ENCODE measurements at regions of chr12 and their contacts with region 1.

Region 1: DNA sequence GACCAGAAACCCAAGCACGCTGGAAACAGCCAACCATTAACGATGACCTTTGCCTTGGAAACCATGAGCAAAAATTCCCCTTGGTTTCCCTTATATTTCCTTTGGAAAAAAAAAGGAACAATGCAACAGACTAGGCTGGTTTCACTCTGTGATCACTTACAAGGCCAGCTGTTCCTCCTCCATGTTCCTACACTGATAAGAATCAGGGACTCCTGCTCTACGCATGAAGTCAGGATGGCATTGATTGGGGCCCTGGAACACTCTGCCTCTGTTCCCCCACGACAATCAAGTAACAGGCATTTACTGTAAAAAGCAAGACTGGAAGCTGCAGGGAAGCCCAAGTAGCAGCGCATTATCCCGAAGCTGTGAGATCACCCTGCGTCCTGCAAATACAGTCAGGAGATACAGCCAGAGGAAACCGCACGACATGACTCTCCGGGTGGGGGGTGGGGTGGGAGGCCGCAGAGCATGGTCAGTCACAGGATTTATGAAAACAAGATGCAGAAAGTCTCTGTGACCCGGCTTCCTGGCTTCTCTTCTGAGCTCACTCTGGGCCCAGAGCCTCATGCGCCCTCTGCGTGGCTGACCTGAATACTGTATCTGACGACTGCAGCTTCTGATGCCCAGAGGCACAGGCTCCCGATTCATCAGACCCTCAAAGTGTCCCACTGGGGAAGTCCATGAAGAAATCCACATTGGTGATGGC is 31.1 kb downstream of the SSH1 start:
- DNase-seq: peak; percentile 21 to 35
- ATAC-seq: peak; percentile 62 to 74 (median 72)
- H3K4me3 ChIP-seq: peak overlapping the region; percentile 6
- H3K4me3 Mint-ChIP-seq: peak overlapping the region; percentile 72
- H3K27ac ChIP-seq: peak overlapping the region; percentile 68
- H3K27ac Mint-ChIP-seq: peak overlapping the region; percentile 91 to 95
- H3K4me1 ChIP-seq: peaks cover 64% of the 10 kb centered on the region
- H3K4me1 Mint-ChIP-seq: peaks cover 68 to 73% of the 10 kb centered on the region in 2 donors
- H3K27me3 ChIP-seq: no peaks in the 10 kb centered on the region
- H3K27me3 Mint-ChIP-seq: no peaks in the 10 kb centered on the region
- CTCF ChIP-seq: no peak

Region 2: DNA sequence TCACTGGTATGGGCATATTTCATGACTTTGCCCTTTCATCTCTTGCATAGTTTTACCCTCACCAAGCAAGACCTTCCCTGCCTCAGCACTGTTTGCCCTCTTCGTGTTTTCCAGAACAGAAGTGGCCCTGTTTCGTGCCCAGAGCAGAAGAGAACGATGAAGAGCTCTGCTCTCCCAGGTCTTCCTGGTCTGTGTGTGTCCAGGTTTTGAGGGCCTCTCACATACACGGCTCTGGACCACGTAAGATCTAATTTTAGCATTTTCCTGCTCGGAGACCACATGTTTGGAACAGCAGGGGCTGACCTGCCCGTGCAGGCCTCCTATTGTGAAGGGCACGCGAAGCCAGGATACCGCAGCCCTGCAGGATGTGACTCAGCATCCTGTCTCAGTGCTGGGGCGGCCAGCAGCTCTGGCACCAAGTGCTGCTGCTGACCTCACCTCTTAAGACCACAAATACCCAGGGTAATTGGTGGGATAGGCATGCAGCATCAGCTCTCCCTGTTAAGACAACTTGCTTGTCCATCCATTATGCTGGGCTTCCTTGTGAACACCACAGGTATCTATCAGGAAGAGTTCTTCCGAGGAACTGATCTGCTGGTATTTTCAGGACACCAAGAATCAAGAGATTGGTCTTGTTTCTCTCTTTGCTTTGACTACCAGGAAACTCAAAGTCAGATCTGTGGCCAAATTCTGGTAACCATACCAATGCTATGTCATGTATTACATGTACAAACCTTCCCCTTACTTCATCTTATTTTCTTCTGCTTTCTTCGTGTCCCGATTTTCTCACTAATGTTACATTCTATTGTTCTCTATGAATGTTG is 12.2 kb after region 1 on chr12:
- intact Hi-C with region 1: loop called (anchors 1 kb)
- DNase-seq: peak; percentile 81 to 83
- ATAC-seq: peak; percentile 91 to 97 (median 96)
- H3K4me3 ChIP-seq: no peak overlapping the region
- H3K4me3 Mint-ChIP-seq: peak overlapping the region; percentile 80
- H3K27ac ChIP-seq: peak overlapping the region; percentile 90
- H3K27ac Mint-ChIP-seq: peak overlapping the region; percentile 98 to 99
- H3K4me1 ChIP-seq: peaks cover 39% of the 10 kb centered on the region
- H3K4me1 Mint-ChIP-seq: peaks cover 74 to 75% of the 10 kb centered on the region in 2 donors
- H3K27me3 ChIP-seq: no peaks in the 10 kb centered on the region
- H3K27me3 Mint-ChIP-seq: no peaks in the 10 kb centered on the region
- CTCF ChIP-seq: no peak

Region 3: GRCh38 chr12:108856428-108857157 is 30.3 kb after region 1 on chr12:
- intact Hi-C with region 1: loop called (anchors 2 kb)
- DNase-seq: peak; percentile 70 to 88
- ATAC-seq: peak; percentile 64 to 79 (median 66)
- H3K4me3 ChIP-seq: peak overlapping the region; percentile 73
- H3K4me3 Mint-ChIP-seq: peak overlapping the region; percentile 94
- H3K27ac ChIP-seq: peak overlapping the region; percentile 75
- H3K27ac Mint-ChIP-seq: peak overlapping the region; percentile 96
- H3K4me1 ChIP-seq: peaks cover 40% of the 10 kb centered on the region
- H3K4me1 Mint-ChIP-seq: peaks cover 49 to 54% of the 10 kb centered on the region in 2 donors
- H3K27me3 ChIP-seq: no peaks in the 10 kb centered on the region
- H3K27me3 Mint-ChIP-seq: no peaks in the 10 kb centered on the region
- CTCF ChIP-seq: no peak

Region 4: DNA sequence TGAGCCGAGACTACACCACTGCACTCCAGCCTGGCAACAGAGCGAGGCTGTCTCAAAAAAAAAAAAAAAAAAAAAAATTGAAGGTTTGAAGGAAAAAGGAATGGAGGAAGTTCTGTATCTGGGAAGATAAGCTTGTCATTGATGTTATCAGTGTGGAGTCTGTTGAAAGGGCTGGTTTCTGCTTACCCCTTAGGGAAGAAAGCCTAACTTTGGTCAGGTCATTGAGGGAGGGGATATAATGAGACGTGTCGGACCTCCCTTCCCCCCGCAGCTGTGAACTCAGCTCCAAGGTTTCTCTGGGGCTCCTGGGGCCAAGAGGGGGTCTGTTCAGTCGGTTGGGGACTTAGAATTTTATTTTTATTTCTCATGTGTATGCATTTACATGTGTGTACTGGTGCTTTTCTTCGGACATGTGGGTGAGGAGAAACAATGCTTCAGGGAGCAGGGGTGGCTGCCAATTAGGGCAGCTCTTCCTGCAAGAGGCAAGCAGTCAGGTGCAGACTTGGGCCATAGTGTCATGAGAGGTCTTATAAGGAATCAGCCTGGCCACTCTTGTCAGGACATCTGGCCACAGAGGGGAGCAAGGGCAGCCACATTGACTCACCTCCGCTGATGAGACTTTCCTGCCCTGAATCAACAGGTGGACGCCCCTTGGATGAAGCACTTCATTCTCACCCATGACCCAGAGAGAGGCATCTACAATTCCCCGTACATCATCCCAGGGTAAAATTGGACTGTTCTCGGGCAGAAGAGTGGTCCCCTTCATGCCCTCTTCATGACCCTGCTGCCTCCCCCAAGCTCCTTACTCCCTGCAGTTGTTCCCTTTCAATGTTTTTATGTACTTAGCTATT is 70.3 kb after region 1 on chr12:
- intact Hi-C with region 1: no loop called
- DNase-seq: no peak
- ATAC-seq: no peak
- H3K4me3 ChIP-seq: no peak overlapping the region
- H3K4me3 Mint-ChIP-seq: no peak overlapping the region
- H3K27ac ChIP-seq: no peak overlapping the region
- H3K27ac Mint-ChIP-seq: no peak overlapping the region
- H3K4me1 ChIP-seq: no peaks in the 10 kb centered on the region
- H3K4me1 Mint-ChIP-seq: no peaks in the 10 kb centered on the region
- H3K27me3 ChIP-seq: no peaks in the 10 kb centered on the region
- H3K27me3 Mint-ChIP-seq: peaks cover 0 to 6% of the 10 kb centered on the region in 2 donors
- CTCF ChIP-seq: no peak